Posterior vena cava (tissue), 2 donors: ENCODE measurements at regions of chr1 and their contacts with region 1.

Region 1: DNA sequence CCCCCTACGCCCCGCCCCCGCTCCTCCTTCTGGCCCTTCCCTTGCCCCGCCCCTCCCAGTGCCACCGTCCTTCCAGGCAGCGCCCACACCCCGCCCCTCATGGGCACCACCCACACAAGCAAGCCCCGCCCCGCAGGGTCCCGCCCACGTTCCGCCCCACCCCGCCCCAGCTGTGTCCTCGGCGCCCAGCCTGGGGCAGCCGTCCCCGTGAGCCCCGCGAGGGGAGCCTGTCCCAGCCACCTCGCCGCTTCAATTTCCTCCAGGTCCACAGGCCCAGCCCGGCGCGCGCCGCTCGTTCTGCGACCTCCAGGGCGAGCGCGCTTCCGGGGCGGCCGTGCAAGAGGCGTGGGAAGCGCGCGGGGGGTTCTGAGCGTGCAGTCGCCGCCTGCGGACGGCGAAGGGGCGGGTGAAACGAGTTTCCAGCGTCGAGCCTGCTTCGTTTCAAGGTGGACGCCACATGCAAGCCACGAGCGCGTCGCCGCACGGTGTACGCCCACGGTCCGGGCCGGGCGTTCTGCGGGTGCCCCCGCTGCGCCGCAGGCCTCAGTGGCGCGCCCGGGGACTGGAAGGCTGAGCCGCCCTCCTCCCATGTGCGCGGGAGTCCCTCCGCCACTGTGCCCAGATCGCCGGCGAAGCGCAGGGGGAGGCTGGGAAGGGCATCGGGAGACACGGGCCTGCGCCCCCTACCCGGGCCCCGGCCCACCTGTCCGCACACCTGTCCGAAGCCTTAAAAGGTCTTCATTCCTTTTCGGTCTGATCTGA is 10.8 kb upstream of the FAAP20 start:
- DNase-seq: peak; percentile 99

Region 2: GRCh38 chr1:2108213-2108876 is 97.0 kb before region 1 on chr1:
- intact Hi-C with region 1: no loop called
- DNase-seq: no peak

Region 3: GRCh38 chr1:2185880-2186855 is 19.2 kb before region 1 on chr1:
- intact Hi-C with region 1: loop called in 1 of 2 experiments (anchors 1 kb)
- DNase-seq: no peak